Activated B cell treated with CpG ODN at 0.5 μM for 24 hours (primary cell): ENCODE measurements at regions of chr17 and their contacts with region 1.

Region 1: GRCh38 chr17:7687908-7688807 is at the start of gene WRAP53:
- DNase-seq: peak; percentile 91
- ATAC-seq: peak; percentile 77
- H3K4me3 Mint-ChIP-seq: peak within 1 kb of the TSS; percentile 97
- H3K27ac Mint-ChIP-seq: peak within 1 kb of the TSS; percentile 99
- H3K4me1 Mint-ChIP-seq: peaks cover 49% of the 10 kb centered on the region
- H3K27me3 Mint-ChIP-seq: no peaks in the 10 kb centered on the region
- CTCF ChIP-seq: peak; percentile 94
- total RNA-seq, gene WRAP53: 17.1 and 17.6 TPM in 2 replicates

Region 2: GRCh38 chr17:6666077-6666521 is 1022.1 kb before region 1 on chr17:
- CTCF ChIA-PET with region 1: no interaction called
- POLR2A ChIA-PET with region 1: no interaction called
- intact Hi-C with region 1: no loop called
- DNase-seq: no peak
- ATAC-seq: peak; percentile 95
- H3K4me3 Mint-ChIP-seq: no peak overlapping the region
- H3K27ac Mint-ChIP-seq: no peak overlapping the region
- H3K4me1 Mint-ChIP-seq: peaks cover 34% of the 10 kb centered on the region
- H3K27me3 Mint-ChIP-seq: no peaks in the 10 kb centered on the region
- CTCF ChIP-seq: no peak

Region 3: DNA sequence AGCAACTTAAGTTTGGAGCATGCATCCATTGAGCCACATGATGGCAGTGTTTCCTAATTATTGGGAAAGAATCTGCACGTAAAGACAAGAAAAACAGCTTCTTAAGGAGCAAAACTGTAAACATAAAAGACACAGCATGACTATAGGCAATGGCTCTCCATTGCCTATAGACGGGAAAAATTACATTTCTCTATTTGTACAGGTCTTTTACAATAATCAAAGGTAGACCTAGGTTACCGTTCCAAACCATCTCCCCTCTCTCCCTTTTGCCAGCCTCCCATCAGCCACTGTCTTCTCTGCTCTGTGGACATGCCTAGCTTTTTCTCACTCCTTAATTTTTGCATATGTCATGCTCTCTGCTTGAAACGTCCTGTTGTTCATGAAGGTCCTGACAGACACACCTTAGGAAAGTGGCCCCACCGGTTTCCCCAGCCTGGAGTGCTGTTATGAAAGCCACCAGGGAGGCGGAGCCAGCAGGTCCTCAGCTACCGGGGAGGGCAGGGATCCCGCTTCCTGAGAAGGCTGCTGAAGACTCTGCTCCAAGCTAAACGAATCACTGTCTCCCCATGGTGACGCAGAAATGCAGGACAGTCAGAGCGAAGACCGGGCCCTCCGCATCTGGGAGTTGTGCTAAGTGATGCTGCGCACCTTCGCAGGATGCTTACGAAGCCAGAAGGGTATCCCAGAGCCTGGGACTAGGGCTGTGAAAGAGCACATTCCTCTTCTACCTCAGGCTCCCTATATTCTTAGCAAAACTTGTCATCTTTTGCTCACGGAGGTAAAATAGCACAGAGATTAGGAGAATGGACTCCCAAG is 642.0 kb before region 1 on chr17:
- CTCF ChIA-PET with region 1: no interaction called
- POLR2A ChIA-PET with region 1: interaction called, 7 read pairs
- intact Hi-C with region 1: loop called (anchors 2 kb)
- DNase-seq: peak; percentile 30
- ATAC-seq: peak; percentile 11
- H3K4me3 Mint-ChIP-seq: peak overlapping the region; percentile 81
- H3K27ac Mint-ChIP-seq: peak overlapping the region; percentile 86
- H3K4me1 Mint-ChIP-seq: peaks cover 45% of the 10 kb centered on the region
- H3K27me3 Mint-ChIP-seq: no peaks in the 10 kb centered on the region
- CTCF ChIP-seq: no peak

Region 4: GRCh38 chr17:7329374-7329996 is 358.7 kb before region 1 on chr17:
- CTCF ChIA-PET with region 1: no interaction called
- POLR2A ChIA-PET with region 1: interaction called, 20 read pairs
- intact Hi-C with region 1: loop called (anchors 1 kb)
- DNase-seq: peak; percentile 92
- ATAC-seq: peak; percentile 74
- H3K4me3 Mint-ChIP-seq: peak overlapping the region; percentile 95
- H3K27ac Mint-ChIP-seq: peak overlapping the region; percentile 96
- H3K4me1 Mint-ChIP-seq: peaks cover 41% of the 10 kb centered on the region
- H3K27me3 Mint-ChIP-seq: no peaks in the 10 kb centered on the region
- CTCF ChIP-seq: no peak

Region 5: GRCh38 chr17:7484067-7484918 is 203.9 kb before region 1 on chr17 and contains the start of gene POLR2A:
- CTCF ChIA-PET with region 1: no interaction called
- POLR2A ChIA-PET with region 1: interaction called, 56 read pairs
- intact Hi-C with region 1: loop called (anchors 1 kb)
- DNase-seq: peak; percentile 99
- ATAC-seq: peak; percentile 66
- H3K4me3 Mint-ChIP-seq: peak within 1 kb of the TSS; percentile 98
- H3K27ac Mint-ChIP-seq: peak within 1 kb of the TSS; percentile 100
- H3K4me1 Mint-ChIP-seq: peaks cover 69% of the 10 kb centered on the region
- H3K27me3 Mint-ChIP-seq: no peaks in the 10 kb centered on the region
- CTCF ChIP-seq: no peak
- total RNA-seq, gene POLR2A: 148 and 162 TPM in 2 replicates

Region 6: GRCh38 chr17:7614422-7615264 is 73.5 kb before region 1 on chr17 and contains the start of gene FXR2:
- CTCF ChIA-PET with region 1: interaction called, 6 read pairs
- POLR2A ChIA-PET with region 1: interaction called, 109 read pairs
- intact Hi-C with region 1: loop called (anchors 1 kb)
- DNase-seq: peak; percentile 97
- ATAC-seq: peak; percentile 93
- H3K4me3 Mint-ChIP-seq: peak within 1 kb of the TSS; percentile 87
- H3K27ac Mint-ChIP-seq: peak within 1 kb of the TSS; percentile 93
- H3K4me1 Mint-ChIP-seq: peaks cover 37% of the 10 kb centered on the region
- H3K27me3 Mint-ChIP-seq: no peaks in the 10 kb centered on the region
- CTCF ChIP-seq: no peak
- total RNA-seq, gene FXR2: 27.5 and 32.4 TPM in 2 replicates

Region 7: DNA sequence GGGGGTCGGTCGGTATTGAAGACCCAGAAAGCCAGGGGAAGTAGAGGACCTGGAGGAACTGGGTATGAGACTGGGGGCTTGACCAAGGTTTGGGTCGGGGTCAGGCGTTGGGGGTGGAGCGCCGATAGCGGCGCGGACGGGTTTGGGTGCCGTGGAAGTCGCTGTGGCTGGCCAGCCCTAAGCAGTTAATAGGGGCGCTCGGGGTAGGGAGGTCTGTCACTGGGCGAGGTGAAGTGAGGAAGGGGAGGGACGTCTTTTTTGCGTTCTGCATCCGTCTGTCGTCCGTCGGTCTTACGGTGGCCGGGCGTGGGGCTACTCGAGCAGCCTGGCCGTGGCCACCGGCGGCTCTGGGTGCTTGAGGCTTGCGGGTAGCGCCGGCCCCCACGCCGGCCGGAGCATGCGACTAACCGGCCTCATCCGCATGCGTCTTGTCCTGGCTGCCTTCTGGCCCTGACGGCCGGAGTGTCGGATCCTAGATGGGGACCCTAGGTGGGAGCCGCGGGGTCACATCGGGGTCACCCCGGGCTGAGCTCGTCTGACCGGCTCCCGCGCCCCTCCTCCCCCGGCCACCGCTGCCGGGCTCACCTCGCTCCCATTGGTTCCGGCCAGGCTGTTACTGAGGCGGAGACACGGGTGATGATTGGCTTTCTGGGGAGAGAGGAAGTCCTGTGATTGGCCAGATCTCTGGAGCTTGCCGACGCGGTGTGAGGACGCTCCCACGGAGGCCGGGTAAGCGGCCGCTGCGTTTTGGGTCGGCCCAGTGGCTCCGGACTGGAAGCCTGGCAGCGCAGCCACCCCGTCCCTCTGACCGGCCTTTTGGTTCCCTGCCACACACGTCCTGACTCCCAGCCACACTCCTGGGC is 156.4 kb after region 1 on chr17:
- CTCF ChIA-PET with region 1: no interaction called
- POLR2A ChIA-PET with region 1: interaction called, 43 read pairs
- intact Hi-C with region 1: loop called (anchors 1 kb)
- DNase-seq: peak; percentile 83
- ATAC-seq: peak; percentile 46
- H3K4me3 Mint-ChIP-seq: peak overlapping the region; percentile 98
- H3K27ac Mint-ChIP-seq: peak overlapping the region; percentile 100
- H3K4me1 Mint-ChIP-seq: peaks cover 50% of the 10 kb centered on the region
- H3K27me3 Mint-ChIP-seq: no peaks in the 10 kb centered on the region
- CTCF ChIP-seq: no peak

Region 8: GRCh38 chr17:8173056-8173870 is 485.1 kb after region 1 on chr17:
- CTCF ChIA-PET with region 1: no interaction called
- POLR2A ChIA-PET with region 1: interaction called, 10 read pairs
- intact Hi-C with region 1: no loop called
- DNase-seq: peak; percentile 40
- ATAC-seq: peak; percentile 76
- H3K4me3 Mint-ChIP-seq: peak overlapping the region; percentile 84
- H3K27ac Mint-ChIP-seq: peak overlapping the region; percentile 100
- H3K4me1 Mint-ChIP-seq: peaks cover 44% of the 10 kb centered on the region
- H3K27me3 Mint-ChIP-seq: no peaks in the 10 kb centered on the region
- CTCF ChIP-seq: no peak